Left cardiac atrium (tissue), 4 donors: ENCODE measurements at regions of chr4 and their contacts with region 1.

Region 1: DNA sequence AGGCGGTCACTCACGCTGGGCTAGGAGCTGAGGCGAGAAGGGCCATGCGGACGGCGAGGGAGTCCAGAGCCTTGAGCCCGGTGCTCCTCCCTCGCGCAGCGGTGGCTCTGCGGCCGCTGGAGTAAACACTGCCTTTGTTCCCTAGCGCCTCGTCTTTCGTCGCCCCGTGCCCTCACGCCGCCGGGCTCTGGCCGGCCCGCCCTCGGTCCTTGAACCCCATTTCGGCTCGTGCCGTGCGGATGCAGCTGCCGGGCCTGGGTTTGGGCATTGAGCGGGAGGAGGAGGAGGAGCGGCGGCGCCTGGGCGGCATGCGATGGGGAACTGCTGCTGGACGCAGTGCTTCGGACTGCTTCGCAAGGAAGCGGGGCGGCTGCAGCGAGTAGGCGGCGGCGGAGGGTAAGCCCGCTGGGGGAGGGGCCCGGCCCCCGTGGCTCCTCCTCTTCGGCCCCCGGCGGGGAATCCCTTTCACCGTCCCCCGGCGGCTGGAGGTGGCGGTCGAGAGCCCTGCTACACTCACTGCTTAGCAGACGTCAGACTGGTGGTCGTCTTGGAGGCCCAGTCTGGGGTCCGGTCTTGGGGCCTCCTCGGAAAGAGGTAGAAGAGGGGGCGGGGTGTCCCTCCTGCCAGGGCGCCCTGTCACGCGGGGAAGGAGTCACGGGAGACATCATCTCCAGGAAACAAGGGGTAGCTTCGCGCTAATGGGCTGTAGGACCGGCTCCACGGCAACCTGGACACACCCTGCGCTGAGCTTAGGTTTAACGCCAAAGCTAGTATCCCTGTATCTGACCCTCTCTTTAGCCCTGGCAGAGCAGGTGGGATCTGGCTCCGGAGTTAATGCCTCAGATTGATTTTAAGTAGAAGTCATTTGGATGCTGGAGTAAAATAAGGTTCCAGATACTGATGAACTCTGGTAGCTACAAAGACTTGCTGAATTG is at the start of gene AP1AR:
- DNase-seq: peak; percentile 88
- ATAC-seq: peak; percentile 84 to 89
- total RNA-seq, gene AP1AR: 9.6 to 13.6 TPM

Region 2: GRCh38 chr4:111960241-111960667 is 271.8 kb before region 1 on chr4:
- intact Hi-C with region 1: no loop called
- DNase-seq: no peak
- ATAC-seq: no peak

Region 3: GRCh38 chr4:112099701-112100297 is 132.2 kb before region 1 on chr4:
- intact Hi-C with region 1: loop called (anchors 1 to 5 kb)
- DNase-seq: no peak
- ATAC-seq: peak; percentile 66 to 84

Region 4: GRCh38 chr4:112145326-112145819 is 86.7 kb before region 1 on chr4 and contains the start of gene FAM241A:
- intact Hi-C with region 1: loop called in 1 of 2 experiments (anchors 5 kb)
- DNase-seq: peak; percentile 89
- ATAC-seq: peak; percentile 98 to 99
- total RNA-seq, gene FAM241A: 5.0 to 7.7 TPM